Caco-2 (cell line): ENCODE measurements at regions of chr1 and their contacts with region 1.

Region 1: GRCh38 chr1:184691719-184692324 is 62.8 kb downstream of the EDEM3 start:
- DNase-seq: peak in 1 of 2 experiments; percentile 36
- H3K4me3 ChIP-seq: no peak overlapping the region
- H3K4me3 Mint-ChIP-seq: no peak overlapping the region
- H3K27ac Mint-ChIP-seq: no peak overlapping the region
- H3K4me1 ChIP-seq: no peaks in the 10 kb centered on the region
- H3K4me1 Mint-ChIP-seq: no peaks in the 10 kb centered on the region
- H3K27me3 ChIP-seq: no peaks in the 10 kb centered on the region
- H3K27me3 Mint-ChIP-seq: no peaks in the 10 kb centered on the region
- CTCF ChIP-seq: peak; percentile 75 to 89

Region 2: GRCh38 chr1:184379111-184379946 is 312.5 kb before region 1 on chr1:
- CTCF ChIA-PET with region 1: interaction called, 3 read pairs
- POLR2A ChIA-PET with region 1: no interaction called
- intact Hi-C with region 1: loop called (anchors 10 kb)
- DNase-seq: no peak
- H3K4me3 ChIP-seq: no peak overlapping the region
- H3K4me3 Mint-ChIP-seq: no peak overlapping the region
- H3K27ac Mint-ChIP-seq: no peak overlapping the region
- H3K4me1 ChIP-seq: no peaks in the 10 kb centered on the region
- H3K4me1 Mint-ChIP-seq: no peaks in the 10 kb centered on the region
- H3K27me3 ChIP-seq: no peaks in the 10 kb centered on the region; the same call in 1 of the 2 replicates
- H3K27me3 Mint-ChIP-seq: peaks cover 17% of the 10 kb centered on the region
- CTCF ChIP-seq: peak in 1 of 2 experiments; percentile 29

Region 3: GRCh38 chr1:184649451-184649888 is 42.4 kb before region 1 on chr1:
- CTCF ChIA-PET with region 1: no interaction called
- POLR2A ChIA-PET with region 1: no interaction called
- intact Hi-C with region 1: no loop called
- DNase-seq: no peak
- H3K4me3 ChIP-seq: no peak overlapping the region
- H3K4me3 Mint-ChIP-seq: no peak overlapping the region
- H3K27ac Mint-ChIP-seq: no peak overlapping the region
- H3K4me1 ChIP-seq: no peaks in the 10 kb centered on the region
- H3K4me1 Mint-ChIP-seq: no peaks in the 10 kb centered on the region
- H3K27me3 ChIP-seq: no peaks in the 10 kb centered on the region
- H3K27me3 Mint-ChIP-seq: peaks cover 3% of the 10 kb centered on the region
- CTCF ChIP-seq: no peak